ENCODE measurements at regions of chr9 and their contacts with region 1.

Region 1: DNA sequence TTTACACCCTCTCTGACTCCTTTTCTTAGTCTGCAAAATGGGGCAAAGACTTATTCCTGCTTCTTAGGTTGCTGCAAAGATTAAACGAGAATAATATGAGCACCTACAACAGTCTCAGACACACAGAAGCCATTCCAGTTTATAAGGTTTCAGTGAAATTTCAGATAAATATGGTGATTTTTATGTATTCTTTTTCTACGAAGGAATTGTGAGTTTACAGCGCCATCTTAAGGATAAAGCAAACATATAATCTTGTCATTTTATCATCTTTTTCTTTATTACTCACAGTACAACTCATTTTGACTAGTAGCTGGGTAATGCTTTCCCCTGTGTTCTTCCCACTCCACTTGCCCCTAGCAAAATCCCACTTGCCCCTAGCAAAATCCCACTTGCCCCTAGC is 29.2 kb upstream of the SMC5 start:
- DNase-seq: no peak
- H3K4me3 ChIP-seq: no peak overlapping the region
- H3K27ac ChIP-seq: peak overlapping the region in 3 of 4 donors; percentile 6 to 36 (median 32)
- H3K4me1 ChIP-seq: peaks cover 0 to 28% (median 20%) of the 10 kb centered on the region in 4 donors
- H3K27me3 ChIP-seq: no peaks in the 10 kb centered on the region
- CTCF ChIP-seq: no peak
- EP300 ChIP-seq: no peak
- POLR2A ChIP-seq: no peak

Region 2: DNA sequence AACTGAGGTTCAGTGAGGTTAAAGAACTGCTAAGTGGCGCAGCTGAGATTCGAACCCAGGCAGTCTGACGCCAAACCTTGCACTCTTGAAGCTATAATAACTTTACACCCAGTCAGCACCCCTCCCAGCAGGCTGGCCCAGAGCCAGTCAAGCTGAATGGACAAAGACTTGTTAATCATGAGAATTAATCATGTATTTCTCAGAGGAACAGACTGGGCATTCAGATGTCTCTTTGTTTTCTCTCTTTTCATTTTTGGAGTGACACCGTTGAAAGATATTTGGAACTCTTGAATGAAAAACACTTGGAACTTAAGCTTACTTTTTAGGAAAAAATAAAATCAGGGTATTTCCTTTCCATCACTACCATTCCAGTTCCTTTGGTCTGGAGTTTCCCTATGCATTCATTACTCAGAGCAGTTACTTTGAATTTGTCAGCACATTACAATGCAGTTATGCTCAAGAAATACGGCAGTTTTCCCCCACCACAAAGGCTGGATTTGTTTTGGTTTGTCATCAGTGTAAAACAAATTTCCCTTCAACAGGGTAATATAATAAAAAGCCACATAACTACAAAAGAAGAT is 208.5 kb before region 1 on chr9:
- intact Hi-C with region 1: no loop called
- DNase-seq: no peak
- H3K4me3 ChIP-seq: no peak overlapping the region
- H3K27ac ChIP-seq: no peak overlapping the region
- H3K4me1 ChIP-seq: peaks cover 0 to 9% (median 4%) of the 10 kb centered on the region in 4 donors
- H3K27me3 ChIP-seq: no peaks in the 10 kb centered on the region
- CTCF ChIP-seq: no peak
- EP300 ChIP-seq: no peak
- POLR2A ChIP-seq: no peak

Region 3: GRCh38 chr9:70120834-70121510 is 108.6 kb before region 1 on chr9:
- intact Hi-C with region 1: loop called (anchors 5 kb)
- DNase-seq: peak; percentile 89
- H3K4me3 ChIP-seq: no peak overlapping the region
- H3K27ac ChIP-seq: peak overlapping the region; percentile 41 to 76 (median 62)
- H3K4me1 ChIP-seq: peaks cover 0 to 38% (median 21%) of the 10 kb centered on the region in 4 donors
- H3K27me3 ChIP-seq: no peaks in the 10 kb centered on the region
- CTCF ChIP-seq: peak; percentile 5 to 32 (median 19)
- EP300 ChIP-seq: no peak
- POLR2A ChIP-seq: no peak

Region 4: DNA sequence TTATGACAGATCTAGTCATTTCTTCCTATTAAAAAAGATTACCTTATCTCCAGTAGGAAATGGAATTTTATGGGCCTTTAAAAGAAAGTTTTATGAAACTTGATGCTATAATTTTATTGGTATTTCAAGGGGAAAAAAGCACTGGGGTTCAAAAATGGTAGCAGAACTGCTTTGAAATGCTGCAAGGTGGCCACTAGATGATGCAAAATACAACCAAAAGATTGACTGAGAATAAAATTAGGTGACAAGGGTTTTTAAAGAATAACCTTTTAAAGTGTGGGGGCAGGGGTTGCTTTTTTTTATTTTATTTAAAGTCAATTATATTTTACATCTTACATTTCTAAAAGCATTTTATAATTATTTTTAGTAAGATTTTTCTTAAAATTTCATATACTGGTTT is 123.2 kb after region 1 on chr9:
- intact Hi-C with region 1: no loop called
- DNase-seq: no peak
- H3K4me3 ChIP-seq: no peak overlapping the region
- H3K27ac ChIP-seq: peak overlapping the region; percentile 14 to 51 (median 34)
- H3K4me1 ChIP-seq: peaks cover 0 to 10% (median 4%) of the 10 kb centered on the region in 4 donors
- H3K27me3 ChIP-seq: no peaks in the 10 kb centered on the region
- CTCF ChIP-seq: peak; percentile 70 to 91 (median 72)
- EP300 ChIP-seq: no peak
- POLR2A ChIP-seq: no peak

Measured in sigmoid colon (tissue), 7 donors.